Activated T-helper 1 cell treated with anti-CD3 and anti-CD28 coated beads, Interleukin-12 subunit alpha, Interleukin-12 subunit beta, Interleukin-2, Interleukin-4 antibody, amounts not matched to agents 30 ng/mL and 10 ng/mL and 1 ng/mL, durations not matched to agents 14 hours and 24 hours and 36 hours (primary cell): ENCODE measurements at regions of chr1 and their contacts with region 1.

Region 1: DNA sequence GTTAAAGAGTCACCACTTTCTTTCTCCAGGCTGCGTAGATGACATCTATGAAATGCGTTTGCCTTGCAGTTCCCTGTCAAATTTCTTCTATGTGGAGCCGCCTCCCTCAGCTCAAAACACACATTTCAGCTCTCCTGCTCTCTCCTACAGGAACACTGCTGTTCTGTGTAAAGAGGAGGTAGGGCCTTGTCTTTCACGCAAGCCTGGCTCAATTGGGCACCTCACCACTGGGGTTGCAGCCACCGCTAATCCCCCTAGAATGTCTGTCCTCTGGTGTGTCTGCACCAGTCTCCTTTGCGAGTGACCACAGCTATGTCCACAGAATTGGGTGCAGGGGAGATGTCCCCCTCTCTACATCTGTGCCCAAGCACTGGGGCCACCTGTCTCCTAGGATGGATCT is 31.8 kb upstream of the CFHR4 start:
- DNase-seq: no peak
- H3K4me3 Mint-ChIP-seq: no peak overlapping the region
- H3K27ac Mint-ChIP-seq: no peak overlapping the region
- H3K4me1 Mint-ChIP-seq: no peaks in the 10 kb centered on the region
- H3K27me3 Mint-ChIP-seq: no peaks in the 10 kb centered on the region

Region 2: DNA sequence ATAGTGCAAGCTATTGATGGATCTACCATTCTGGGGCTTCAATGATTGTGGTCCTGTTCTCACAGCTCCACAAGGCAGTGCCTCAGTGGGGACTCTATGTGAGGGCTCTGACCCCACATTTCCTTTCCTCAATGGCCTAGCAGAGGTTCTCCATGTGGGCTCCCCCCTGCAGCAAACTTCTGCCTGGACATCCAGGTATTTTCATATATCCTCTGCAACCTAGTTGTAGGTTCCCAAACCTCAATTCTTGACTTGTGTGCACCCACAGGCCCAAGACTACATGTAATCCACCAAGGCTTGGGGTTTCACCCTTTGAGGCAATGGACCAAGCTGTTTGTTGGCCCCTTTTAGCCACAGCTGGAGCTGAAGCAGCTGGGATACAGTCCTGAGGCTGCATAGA is 117.3 kb before region 1 on chr1:
- intact Hi-C with region 1: loop called (anchors 10 kb)
- DNase-seq: no peak
- H3K4me3 Mint-ChIP-seq: no peak overlapping the region
- H3K27ac Mint-ChIP-seq: no peak overlapping the region
- H3K4me1 Mint-ChIP-seq: no peaks in the 10 kb centered on the region
- H3K27me3 Mint-ChIP-seq: no peaks in the 10 kb centered on the region

Region 3: DNA sequence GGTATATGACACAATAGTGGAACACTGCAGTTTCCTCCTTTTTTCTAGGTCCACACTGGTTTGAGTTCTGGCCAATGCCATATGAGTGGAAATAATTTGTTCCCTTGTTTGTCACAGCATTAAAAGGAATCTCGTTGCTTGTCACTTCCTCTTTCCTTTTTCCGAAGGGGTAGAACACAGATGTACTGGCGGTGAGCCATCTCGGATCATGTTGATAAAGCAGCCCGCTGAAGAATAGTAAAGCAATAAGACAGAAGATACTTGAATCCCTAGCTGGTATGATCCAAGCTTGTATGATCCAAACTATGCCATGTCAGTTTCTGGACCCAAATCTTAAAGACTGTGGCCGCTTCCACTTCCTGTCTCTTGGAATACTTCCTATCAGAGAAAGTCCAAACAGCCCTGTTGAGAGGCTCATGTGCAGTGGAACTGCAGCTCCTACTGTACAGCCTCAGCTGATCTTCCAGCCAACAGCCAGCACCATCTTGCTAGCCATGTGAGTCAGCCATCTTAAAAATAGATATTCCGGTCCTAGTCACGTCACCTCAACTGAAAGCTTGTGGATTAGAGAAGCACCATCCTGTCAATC is 161.6 kb after region 1 on chr1:
- intact Hi-C with region 1: no loop called
- DNase-seq: no peak
- H3K4me3 Mint-ChIP-seq: no peak overlapping the region
- H3K27ac Mint-ChIP-seq: no peak overlapping the region
- H3K4me1 Mint-ChIP-seq: no peaks in the 10 kb centered on the region
- H3K27me3 Mint-ChIP-seq: peaks cover 2% of the 10 kb centered on the region

Region 4: DNA sequence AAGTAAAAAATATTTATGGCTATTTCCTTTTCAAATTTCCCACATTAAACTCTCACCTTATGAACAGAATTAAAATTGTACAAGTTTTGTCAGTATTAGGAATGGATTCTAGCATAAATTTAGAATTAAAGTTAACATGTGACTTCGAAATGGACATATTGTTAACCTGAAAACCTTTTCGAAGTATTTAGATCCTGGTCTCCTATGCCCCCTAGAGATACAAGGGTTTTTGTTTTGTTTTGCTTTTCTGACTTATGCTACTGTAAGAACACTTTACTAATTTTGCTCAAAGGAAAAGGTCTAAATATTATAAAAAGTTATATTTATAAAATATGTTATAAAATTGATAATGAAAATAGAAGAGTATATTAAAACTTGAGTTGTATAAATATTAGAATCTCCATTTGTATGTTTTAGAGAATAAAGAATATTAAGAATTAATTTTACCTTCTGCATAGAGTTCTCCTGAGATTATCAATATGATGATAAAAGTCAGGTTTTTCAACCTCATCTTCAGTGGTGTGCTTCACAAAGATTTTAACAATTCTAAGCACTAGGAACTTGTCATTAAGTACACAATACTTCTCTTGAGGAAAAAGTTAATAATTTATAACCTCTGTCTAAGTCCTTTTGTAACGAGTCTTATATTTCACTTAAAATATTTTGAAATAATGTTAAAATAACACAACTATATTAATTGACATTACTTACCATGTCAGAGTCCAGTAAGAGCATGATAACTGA is 210.8 kb after region 1 on chr1 and contains the start of gene F13B:
- intact Hi-C with region 1: no loop called
- DNase-seq: no peak
- H3K4me3 Mint-ChIP-seq: no peak within 1 kb of the TSS
- H3K27ac Mint-ChIP-seq: no peak within 1 kb of the TSS
- H3K4me1 Mint-ChIP-seq: no peaks in the 10 kb centered on the region
- H3K27me3 Mint-ChIP-seq: peaks cover 5% of the 10 kb centered on the region
- total RNA-seq, gene F13B: not detected in 2 replicates